Sigmoid colon (tissue), 7 donors: ENCODE measurements at regions of chr11 and their contacts with region 1.

Region 1: GRCh38 chr11:12220305-12220704 is 109.9 kb downstream of the MICAL2 start:
- DNase-seq: peak; percentile 94
- H3K4me3 ChIP-seq: no peak overlapping the region
- H3K27ac ChIP-seq: peak overlapping the region; percentile 66 to 89 (median 76)
- H3K4me1 ChIP-seq: peaks cover 0 to 94% (median 78%) of the 10 kb centered on the region in 4 donors
- H3K27me3 ChIP-seq: no peaks in the 10 kb centered on the region
- CTCF ChIP-seq: no peak
- EP300 ChIP-seq: no peak
- POLR2A ChIP-seq: no peak

Region 2: GRCh38 chr11:12118949-12119348 is 101.4 kb before region 1 on chr11:
- intact Hi-C with region 1: loop called (anchors 2 kb)
- DNase-seq: peak; percentile 81
- H3K4me3 ChIP-seq: no peak overlapping the region
- H3K27ac ChIP-seq: peak overlapping the region; percentile 92 to 98 (median 95)
- H3K4me1 ChIP-seq: peaks cover 0 to 87% (median 74%) of the 10 kb centered on the region in 4 donors
- H3K27me3 ChIP-seq: no peaks in the 10 kb centered on the region
- CTCF ChIP-seq: peak in 1 of 4 experiments; percentile 12
- EP300 ChIP-seq: peak in 2 of 4 donors; percentile 20 to 51
- POLR2A ChIP-seq: no peak

Region 3: GRCh38 chr11:12318791-12319438 is 98.6 kb after region 1 on chr11:
- intact Hi-C with region 1: no loop called
- DNase-seq: peak; percentile 85
- H3K4me3 ChIP-seq: no peak overlapping the region
- H3K27ac ChIP-seq: peak overlapping the region; percentile 70 to 91 (median 82)
- H3K4me1 ChIP-seq: peaks cover 0 to 59% (median 50%) of the 10 kb centered on the region in 4 donors
- H3K27me3 ChIP-seq: no peaks in the 10 kb centered on the region
- CTCF ChIP-seq: no peak
- EP300 ChIP-seq: peak; percentile 77 to 91 (median 89)
- POLR2A ChIP-seq: no peak